CD8-positive, alpha-beta memory T cell (primary cell): ENCODE measurements at regions of chr12 and their contacts with region 1.

Region 1: GRCh38 chr12:38138225-38139221 is 178.1 kb upstream of the ALG10B start:
- DNase-seq: peak in 4 of 5 donors; percentile 45 to 55 (median 50)
- H3K4me3 ChIP-seq: peak overlapping the region; percentile 6
- H3K4me3 Mint-ChIP-seq: peak overlapping the region in 6 of 7 donors; percentile 68 to 89 (median 73)
- H3K27ac ChIP-seq: no peak overlapping the region
- H3K27ac Mint-ChIP-seq: peak overlapping the region in 4 of 8 donors; percentile 37 to 74 (median 63)
- H3K4me1 ChIP-seq: peaks cover 4% of the 10 kb centered on the region
- H3K4me1 Mint-ChIP-seq: peaks cover 8 to 15% (median 13%) of the 10 kb centered on the region in 3 donors
- H3K27me3 ChIP-seq: no peaks in the 10 kb centered on the region
- H3K27me3 Mint-ChIP-seq: peaks cover 8 to 21% of the 10 kb centered on the region in 2 donors

Region 2: GRCh38 chr12:38161123-38162000 is 22.8 kb after region 1 on chr12:
- CTCF ChIA-PET with region 1: no interaction called
- POLR2A ChIA-PET with region 1: no interaction called
- DNase-seq: no peak
- H3K4me3 ChIP-seq: no peak overlapping the region
- H3K4me3 Mint-ChIP-seq: peak overlapping the region in 1 of 7 donors; percentile 48
- H3K27ac ChIP-seq: no peak overlapping the region
- H3K27ac Mint-ChIP-seq: no peak overlapping the region
- H3K4me1 ChIP-seq: no peaks in the 10 kb centered on the region
- H3K4me1 Mint-ChIP-seq: no peaks in the 10 kb centered on the region
- H3K27me3 ChIP-seq: no peaks in the 10 kb centered on the region
- H3K27me3 Mint-ChIP-seq: no peaks in the 10 kb centered on the region

Region 3: GRCh38 chr12:38316391-38317129 is 178.0 kb after region 1 on chr12 and contains the start of gene ALG10B:
- CTCF ChIA-PET with region 1: interaction called, 10 read pairs
- POLR2A ChIA-PET with region 1: no interaction called
- DNase-seq: peak; percentile 85 to 95 (median 91)
- H3K4me3 ChIP-seq: peak within 1 kb of the TSS; percentile 83
- H3K4me3 Mint-ChIP-seq: peak within 1 kb of the TSS; percentile 91 to 96 (median 93)
- H3K27ac ChIP-seq: peak within 1 kb of the TSS; percentile 81
- H3K27ac Mint-ChIP-seq: peak within 1 kb of the TSS; percentile 91 to 100 (median 98)
- H3K4me1 ChIP-seq: peaks cover 15% of the 10 kb centered on the region
- H3K4me1 Mint-ChIP-seq: peaks cover 27 to 40% (median 31%) of the 10 kb centered on the region in 3 donors
- H3K27me3 ChIP-seq: no peaks in the 10 kb centered on the region
- H3K27me3 Mint-ChIP-seq: no peaks in the 10 kb centered on the region
- total RNA-seq, gene ALG10B: 9.1 to 10.1 TPM

Region 4: GRCh38 chr12:39272871-39273770 is 1134.6 kb after region 1 on chr12:
- CTCF ChIA-PET with region 1: interaction called, 10 read pairs
- POLR2A ChIA-PET with region 1: no interaction called
- DNase-seq: peak in 1 of 5 donors; percentile 10
- H3K4me3 ChIP-seq: no peak overlapping the region
- H3K4me3 Mint-ChIP-seq: no peak overlapping the region
- H3K27ac ChIP-seq: no peak overlapping the region
- H3K27ac Mint-ChIP-seq: no peak overlapping the region
- H3K4me1 ChIP-seq: no peaks in the 10 kb centered on the region
- H3K4me1 Mint-ChIP-seq: peaks cover 0 to 2% (median 0%) of the 10 kb centered on the region in 3 donors
- H3K27me3 ChIP-seq: no peaks in the 10 kb centered on the region
- H3K27me3 Mint-ChIP-seq: peaks cover 5 to 19% of the 10 kb centered on the region in 2 donors